T-cell (primary cell): ENCODE measurements at regions of chr14 and their contacts with region 1.

Region 1: GRCh38 chr14:73136387-73137225 is at the start of gene PSEN1:
- DNase-seq: peak; percentile 94 to 100 (median 99)
- ATAC-seq: peak; percentile 91 to 97 (median 96)
- H3K4me3 ChIP-seq: peak within 1 kb of the TSS; percentile 87 to 94
- H3K4me3 Mint-ChIP-seq: peak within 1 kb of the TSS; percentile 92 to 98 (median 96)
- H3K27ac ChIP-seq: peak within 1 kb of the TSS; percentile 90
- H3K27ac Mint-ChIP-seq: peak within 1 kb of the TSS; percentile 95 to 97
- H3K4me1 ChIP-seq: peaks cover 5 to 27% of the 10 kb centered on the region in 2 experiments
- H3K4me1 Mint-ChIP-seq: peaks cover 27 to 32% (median 29%) of the 10 kb centered on the region in 3 donors
- H3K27me3 ChIP-seq: no peaks in the 10 kb centered on the region
- H3K27me3 Mint-ChIP-seq: no peaks in the 10 kb centered on the region
- total RNA-seq, gene PSEN1: 31.7 to 49.2 (median 37.9) TPM

Region 2: GRCh38 chr14:73211251-73212040 is 74.8 kb after region 1 on chr14:
- CTCF ChIA-PET with region 1: no interaction called
- POLR2A ChIA-PET with region 1: interaction called in 1 of 2 experiments, 15 read pairs
- DNase-seq: no peak
- ATAC-seq: no peak
- H3K4me3 ChIP-seq: no peak overlapping the region
- H3K4me3 Mint-ChIP-seq: no peak overlapping the region
- H3K27ac ChIP-seq: no peak overlapping the region
- H3K27ac Mint-ChIP-seq: no peak overlapping the region
- H3K4me1 ChIP-seq: no peaks in the 10 kb centered on the region
- H3K4me1 Mint-ChIP-seq: no peaks in the 10 kb centered on the region
- H3K27me3 ChIP-seq: no peaks in the 10 kb centered on the region
- H3K27me3 Mint-ChIP-seq: no peaks in the 10 kb centered on the region